ENCODE measurements at regions of chr7 and their contacts with region 1.

Region 1: GRCh38 chr7:2567679-2568278 is 9.0 kb downstream of the IQCE start:
- DNase-seq: peak; percentile 54
- ATAC-seq: peak; percentile 62
- H3K4me3 ChIP-seq: peak overlapping the region in 3 of 5 experiments; percentile 1 to 48 (median 22)
- H3K4me3 Mint-ChIP-seq: peak overlapping the region; percentile 55
- H3K27ac ChIP-seq: no peak overlapping the region
- H3K27ac Mint-ChIP-seq: peak overlapping the region; percentile 56
- H3K4me1 ChIP-seq: peaks cover 11 to 16% of the 10 kb centered on the region in 2 donors
- H3K4me1 Mint-ChIP-seq: peaks cover 18% of the 10 kb centered on the region
- H3K27me3 ChIP-seq: no peaks in the 10 kb centered on the region
- H3K27me3 Mint-ChIP-seq: no peaks in the 10 kb centered on the region
- CTCF ChIP-seq: no peak

Region 2: GRCh38 chr7:2336626-2337299 is 231.0 kb before region 1 on chr7:
- CTCF ChIA-PET with region 1: no interaction called
- POLR2A ChIA-PET with region 1: no interaction called
- intact Hi-C with region 1: no loop called
- DNase-seq: no peak
- ATAC-seq: no peak
- H3K4me3 ChIP-seq: no peak overlapping the region
- H3K4me3 Mint-ChIP-seq: no peak overlapping the region
- H3K27ac ChIP-seq: no peak overlapping the region
- H3K27ac Mint-ChIP-seq: no peak overlapping the region
- H3K4me1 ChIP-seq: no peaks in the 10 kb centered on the region
- H3K4me1 Mint-ChIP-seq: no peaks in the 10 kb centered on the region
- H3K27me3 ChIP-seq: no peaks in the 10 kb centered on the region
- H3K27me3 Mint-ChIP-seq: no peaks in the 10 kb centered on the region
- CTCF ChIP-seq: no peak

Region 3: GRCh38 chr7:2680792-2681490 is 113.2 kb after region 1 on chr7:
- CTCF ChIA-PET with region 1: interaction called, 29 read pairs
- POLR2A ChIA-PET with region 1: no interaction called
- intact Hi-C with region 1: loop called (anchors 2 kb)
- DNase-seq: peak; percentile 74
- ATAC-seq: peak; percentile 73
- H3K4me3 ChIP-seq: no peak overlapping the region
- H3K4me3 Mint-ChIP-seq: no peak overlapping the region
- H3K27ac ChIP-seq: no peak overlapping the region
- H3K27ac Mint-ChIP-seq: no peak overlapping the region
- H3K4me1 ChIP-seq: peaks cover 0 to 4% of the 10 kb centered on the region in 2 donors
- H3K4me1 Mint-ChIP-seq: no peaks in the 10 kb centered on the region
- H3K27me3 ChIP-seq: peaks cover 0 to 6% (median under 1%) of the 10 kb centered on the region in 4 experiments
- H3K27me3 Mint-ChIP-seq: peaks cover 12% of the 10 kb centered on the region
- CTCF ChIP-seq: peak; percentile 68

Region 4: DNA sequence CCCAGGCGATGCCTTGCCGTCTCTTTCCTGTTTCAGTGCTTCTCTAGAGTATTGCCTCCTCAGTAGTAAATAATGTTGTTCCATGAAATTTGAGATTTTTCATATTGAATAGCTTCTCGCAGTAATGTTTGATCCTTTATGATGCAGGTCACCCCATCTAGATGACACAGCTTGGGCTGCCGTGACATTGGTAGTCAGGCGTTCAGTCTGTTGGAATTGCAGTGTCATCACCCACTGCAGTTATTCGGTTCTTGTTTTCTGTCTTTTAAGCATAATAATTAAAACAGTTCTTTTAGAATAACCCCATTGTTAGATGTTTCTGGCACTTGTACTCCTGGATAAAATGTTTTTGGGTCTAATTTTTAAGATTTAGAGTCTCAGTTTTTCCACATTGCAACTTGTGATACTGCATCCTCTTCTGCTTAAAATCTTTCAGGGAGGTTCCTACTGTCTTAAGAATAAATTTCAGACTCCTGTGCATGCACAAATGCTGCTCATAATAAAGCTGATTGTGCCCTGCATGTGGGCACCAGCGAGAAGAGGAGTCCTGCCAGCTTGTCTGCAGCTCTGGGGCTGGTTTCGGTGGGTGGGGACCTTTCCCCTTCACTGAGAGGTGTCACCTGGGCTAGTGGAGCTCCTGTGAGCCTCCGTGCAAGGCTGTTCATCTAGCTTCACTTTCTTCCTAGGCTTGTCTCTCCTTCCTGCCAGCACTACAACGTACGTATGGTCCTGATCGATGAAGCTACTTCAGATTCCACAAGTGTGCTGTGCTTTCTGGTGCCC is 778.1 kb after region 1 on chr7:
- CTCF ChIA-PET with region 1: no interaction called
- POLR2A ChIA-PET with region 1: no interaction called
- intact Hi-C with region 1: no loop called
- DNase-seq: no peak
- ATAC-seq: no peak
- H3K4me3 ChIP-seq: no peak overlapping the region
- H3K4me3 Mint-ChIP-seq: no peak overlapping the region
- H3K27ac ChIP-seq: no peak overlapping the region
- H3K27ac Mint-ChIP-seq: no peak overlapping the region
- H3K4me1 ChIP-seq: no peaks in the 10 kb centered on the region
- H3K4me1 Mint-ChIP-seq: no peaks in the 10 kb centered on the region
- H3K27me3 ChIP-seq: peaks cover 0 to 6% (median 1%) of the 10 kb centered on the region in 4 experiments
- H3K27me3 Mint-ChIP-seq: peaks cover 18% of the 10 kb centered on the region
- CTCF ChIP-seq: no peak

Measured in B cell (primary cell).